Gastrocnemius medialis (tissue), 4 donors: ENCODE measurements at regions of chr12 and their contacts with region 1.

Region 1: DNA sequence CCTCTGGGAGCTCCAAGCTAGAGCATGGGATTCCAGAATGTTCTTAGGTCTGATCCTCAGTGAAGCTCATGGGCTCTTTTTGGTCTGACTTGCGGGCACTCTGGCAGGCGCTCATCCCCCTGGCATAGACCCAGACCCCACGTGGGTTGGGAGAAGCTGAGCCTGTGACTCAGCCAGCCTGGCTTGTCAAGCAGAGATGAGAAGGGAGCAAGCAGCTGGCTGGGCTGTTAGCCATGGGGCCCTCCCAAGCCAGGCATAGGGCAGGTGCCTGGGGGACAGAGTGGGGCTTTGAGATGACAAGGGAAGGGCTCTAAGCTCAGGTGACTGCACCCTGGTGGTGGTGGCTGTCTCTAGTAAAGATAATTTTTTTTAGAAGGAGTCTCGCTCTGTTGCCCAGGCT is 80.3 kb upstream of the NOS1 start:
- DNase-seq: peak; percentile 95 to 100
- ATAC-seq: peak; percentile 75 to 77
- H3K4me3 ChIP-seq: peak overlapping the region in 1 of 4 donors; percentile 48
- H3K27ac ChIP-seq: peak overlapping the region; percentile 88 to 98 (median 94)
- H3K4me1 ChIP-seq: peaks cover 36 to 39% of the 10 kb centered on the region in 2 donors
- H3K27me3 ChIP-seq: no peaks in the 10 kb centered on the region
- CTCF ChIP-seq: peak; percentile 34 to 68 (median 53)
- POLR2A ChIP-seq: peak; percentile 16 to 28

Region 2: GRCh38 chr12:117333331-117333881 is 108.3 kb before region 1 on chr12:
- in situ Hi-C with region 1: no loop called
- intact Hi-C with region 1: no loop called
- DNase-seq: no peak
- ATAC-seq: no peak
- H3K4me3 ChIP-seq: no peak overlapping the region
- H3K27ac ChIP-seq: no peak overlapping the region
- H3K4me1 ChIP-seq: peaks cover 15 to 19% of the 10 kb centered on the region in 2 donors
- H3K27me3 ChIP-seq: no peaks in the 10 kb centered on the region
- CTCF ChIP-seq: no peak
- POLR2A ChIP-seq: no peak

Region 3: DNA sequence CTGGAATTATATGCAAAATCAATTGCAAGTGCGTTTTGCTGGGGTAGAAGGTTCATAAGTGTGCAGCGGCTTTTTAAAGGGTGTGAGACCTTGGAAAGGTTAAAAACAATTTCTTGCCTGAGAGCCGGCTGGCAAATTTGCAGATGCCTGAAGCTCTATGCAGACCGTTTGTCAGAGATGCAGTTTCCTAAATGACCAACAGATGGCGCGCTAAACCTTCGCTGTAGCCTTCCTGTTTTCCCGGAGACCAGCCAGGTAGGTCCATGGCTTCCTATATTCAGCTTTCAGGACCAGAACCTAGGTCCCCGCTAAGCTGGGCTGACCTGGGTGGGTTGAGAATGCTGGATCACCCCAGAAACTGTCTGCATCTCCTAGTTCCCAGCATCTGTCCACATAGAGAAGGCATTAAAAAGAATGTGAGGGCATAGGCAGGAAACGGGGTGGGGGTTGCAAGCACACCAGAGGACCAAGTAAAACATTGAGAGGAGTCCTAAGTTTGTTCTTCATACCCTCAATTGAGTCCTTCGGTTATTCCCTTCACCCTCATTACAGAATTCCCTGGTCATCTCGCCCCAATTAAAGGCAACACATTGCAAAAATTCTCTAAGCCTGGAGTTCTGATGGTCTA is 74.6 kb before region 1 on chr12:
- in situ Hi-C with region 1: no loop called
- intact Hi-C with region 1: loop called (anchors 1 kb)
- DNase-seq: peak; percentile 68 to 78
- ATAC-seq: peak; percentile 68 to 81
- H3K4me3 ChIP-seq: no peak overlapping the region
- H3K27ac ChIP-seq: peak overlapping the region in 3 of 4 donors; percentile 7 to 56 (median 10)
- H3K4me1 ChIP-seq: peaks cover 8 to 9% of the 10 kb centered on the region in 2 donors
- H3K27me3 ChIP-seq: no peaks in the 10 kb centered on the region
- CTCF ChIP-seq: peak; percentile 90 to 94 (median 91)
- POLR2A ChIP-seq: no peak

Region 4: GRCh38 chr12:117486840-117487659 is 45.3 kb after region 1 on chr12:
- in situ Hi-C with region 1: no loop called
- intact Hi-C with region 1: loop called (anchors 2 kb)
- DNase-seq: peak; percentile 84 to 93
- ATAC-seq: peak; percentile 82 to 89
- H3K4me3 ChIP-seq: no peak overlapping the region
- H3K27ac ChIP-seq: peak overlapping the region; percentile 69 to 88 (median 86)
- H3K4me1 ChIP-seq: peaks cover 15 to 38% of the 10 kb centered on the region in 2 donors
- H3K27me3 ChIP-seq: no peaks in the 10 kb centered on the region
- CTCF ChIP-seq: no peak
- POLR2A ChIP-seq: peak in 1 of 2 donors; percentile 18

Region 5: GRCh38 chr12:117533704-117534103 is 92.0 kb after region 1 on chr12:
- in situ Hi-C with region 1: no loop called
- intact Hi-C with region 1: loop called (anchors 1 kb)
- DNase-seq: peak; percentile 94 to 97
- ATAC-seq: peak; percentile 92 to 96
- H3K4me3 ChIP-seq: no peak overlapping the region
- H3K27ac ChIP-seq: peak overlapping the region; percentile 89 to 93 (median 92)
- H3K4me1 ChIP-seq: peaks cover 22 to 26% of the 10 kb centered on the region in 2 donors
- H3K27me3 ChIP-seq: no peaks in the 10 kb centered on the region
- CTCF ChIP-seq: no peak
- POLR2A ChIP-seq: peak; percentile 32 to 42

Region 6: GRCh38 chr12:117567644-117568216 is 126.0 kb after region 1 on chr12:
- in situ Hi-C with region 1: no loop called
- intact Hi-C with region 1: no loop called
- DNase-seq: no peak
- ATAC-seq: no peak
- H3K4me3 ChIP-seq: no peak overlapping the region
- H3K27ac ChIP-seq: no peak overlapping the region
- H3K4me1 ChIP-seq: no peaks in the 10 kb centered on the region
- H3K27me3 ChIP-seq: no peaks in the 10 kb centered on the region
- CTCF ChIP-seq: no peak
- POLR2A ChIP-seq: no peak

Region 7: GRCh38 chr12:118537481-118537917 is 1095.7 kb after region 1 on chr12:
- in situ Hi-C with region 1: no loop called
- intact Hi-C with region 1: loop called (anchors 5 kb)
- DNase-seq: peak; percentile 71 to 87
- ATAC-seq: peak; percentile 96 to 98
- H3K4me3 ChIP-seq: peak overlapping the region in 1 of 4 donors; percentile 3
- H3K27ac ChIP-seq: peak overlapping the region; percentile 97 to 99 (median 98)
- H3K4me1 ChIP-seq: peaks cover 24% of the 10 kb centered on the region in 2 donors
- H3K27me3 ChIP-seq: no peaks in the 10 kb centered on the region
- CTCF ChIP-seq: no peak
- POLR2A ChIP-seq: peak; percentile 26 to 77